Thyroid gland (tissue), 4 donors: ENCODE measurements at regions of chr2 and their contacts with region 1.

Region 1: DNA sequence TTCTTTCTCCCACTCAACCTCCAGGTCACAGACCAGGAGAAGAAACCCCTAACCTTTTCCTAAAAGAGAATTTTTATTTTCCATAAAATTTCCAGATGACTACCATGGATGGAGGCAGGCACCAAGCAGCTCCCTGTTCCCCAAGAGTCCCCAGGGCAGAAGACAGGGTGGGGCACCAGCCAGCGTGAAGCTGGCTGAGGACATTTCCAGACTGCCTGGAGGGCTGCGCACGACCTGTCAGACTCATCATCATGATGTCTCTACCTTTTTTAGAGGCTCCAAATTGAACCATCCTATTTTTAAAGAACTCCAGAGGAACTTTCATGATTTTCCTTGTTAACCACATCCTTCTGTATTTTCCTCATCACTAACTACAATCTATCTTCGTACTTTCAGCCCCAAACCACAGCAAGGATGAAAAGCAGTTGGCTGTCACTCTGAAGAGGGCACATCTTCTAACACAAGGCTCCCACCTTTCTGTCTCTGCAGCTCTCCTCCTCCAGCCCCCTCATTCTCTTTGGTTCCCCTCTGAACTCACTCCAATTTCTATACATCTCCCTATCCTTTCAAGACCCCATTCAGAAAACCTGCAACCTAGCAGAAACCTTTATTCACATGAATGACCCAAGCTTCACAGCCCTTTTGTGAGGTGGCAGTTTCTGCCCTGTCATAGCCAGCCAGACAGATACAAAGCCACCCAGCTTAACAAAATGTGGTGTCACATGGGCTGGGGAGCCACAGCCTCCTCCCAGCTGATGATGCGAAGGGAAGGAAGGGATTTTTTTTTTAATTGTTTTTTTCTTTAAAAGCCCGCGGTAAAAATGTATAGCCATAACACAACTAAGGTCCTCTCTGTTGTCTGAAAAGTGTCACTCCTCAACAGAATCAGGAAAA is 11.1 kb downstream of the AMMECR1L start:
- DNase-seq: no peak
- H3K4me3 ChIP-seq: no peak overlapping the region
- H3K27ac ChIP-seq: no peak overlapping the region
- H3K4me1 ChIP-seq: no peaks in the 10 kb centered on the region
- H3K27me3 ChIP-seq: no peaks in the 10 kb centered on the region
- CTCF ChIP-seq: no peak
- POLR2A ChIP-seq: no peak

Region 2: DNA sequence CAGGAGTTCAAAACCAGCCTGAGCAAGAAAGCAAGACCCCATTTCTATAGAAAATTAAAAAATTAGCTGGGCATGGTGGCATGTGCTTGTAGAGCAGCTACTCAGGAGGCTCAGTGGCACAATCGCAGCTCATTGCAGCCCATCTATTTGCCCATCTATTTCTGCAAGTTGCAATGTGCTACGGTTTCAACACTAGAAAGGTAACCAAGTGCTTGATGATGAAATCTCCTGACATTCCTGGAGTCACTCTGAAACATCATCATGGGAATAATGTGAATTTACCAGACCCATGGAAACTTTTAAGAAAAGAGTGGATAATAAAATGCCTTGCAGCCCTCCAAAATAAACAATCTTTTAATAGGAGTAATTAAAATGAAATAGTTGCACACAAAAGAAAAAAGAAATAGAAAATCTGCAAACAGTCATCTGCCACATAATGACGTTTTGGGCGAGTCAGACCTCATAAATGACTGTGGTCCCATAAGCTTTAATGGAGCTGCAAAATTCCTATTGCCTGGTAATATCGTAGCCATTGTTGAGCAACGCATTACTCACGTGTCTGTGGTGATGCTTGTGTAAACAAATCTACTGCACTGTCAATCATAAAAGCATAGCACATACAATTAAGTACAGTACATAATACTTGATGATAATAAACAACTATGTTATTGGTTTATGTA is 57.7 kb after region 1 on chr2:
- intact Hi-C with region 1: no loop called
- DNase-seq: no peak
- H3K4me3 ChIP-seq: no peak overlapping the region
- H3K27ac ChIP-seq: no peak overlapping the region
- H3K4me1 ChIP-seq: no peaks in the 10 kb centered on the region
- H3K27me3 ChIP-seq: no peaks in the 10 kb centered on the region
- CTCF ChIP-seq: no peak
- POLR2A ChIP-seq: no peak

Region 3: GRCh38 chr2:127953128-127953718 is 78.6 kb after region 1 on chr2:
- intact Hi-C with region 1: loop called (anchors 10 kb)
- DNase-seq: peak; percentile 29 to 47
- H3K4me3 ChIP-seq: no peak overlapping the region
- H3K27ac ChIP-seq: peak overlapping the region in 1 of 3 donors; percentile 16
- H3K4me1 ChIP-seq: peaks cover 0 to 13% of the 10 kb centered on the region in 2 donors
- H3K27me3 ChIP-seq: no peaks in the 10 kb centered on the region
- CTCF ChIP-seq: no peak
- POLR2A ChIP-seq: no peak